Activated CD8-positive, alpha-beta T cell treated with anti-CD3 and anti-CD28 coated beads for 36 hours (primary cell): ENCODE measurements at regions of chr17 and their contacts with region 1.

Region 1: DNA sequence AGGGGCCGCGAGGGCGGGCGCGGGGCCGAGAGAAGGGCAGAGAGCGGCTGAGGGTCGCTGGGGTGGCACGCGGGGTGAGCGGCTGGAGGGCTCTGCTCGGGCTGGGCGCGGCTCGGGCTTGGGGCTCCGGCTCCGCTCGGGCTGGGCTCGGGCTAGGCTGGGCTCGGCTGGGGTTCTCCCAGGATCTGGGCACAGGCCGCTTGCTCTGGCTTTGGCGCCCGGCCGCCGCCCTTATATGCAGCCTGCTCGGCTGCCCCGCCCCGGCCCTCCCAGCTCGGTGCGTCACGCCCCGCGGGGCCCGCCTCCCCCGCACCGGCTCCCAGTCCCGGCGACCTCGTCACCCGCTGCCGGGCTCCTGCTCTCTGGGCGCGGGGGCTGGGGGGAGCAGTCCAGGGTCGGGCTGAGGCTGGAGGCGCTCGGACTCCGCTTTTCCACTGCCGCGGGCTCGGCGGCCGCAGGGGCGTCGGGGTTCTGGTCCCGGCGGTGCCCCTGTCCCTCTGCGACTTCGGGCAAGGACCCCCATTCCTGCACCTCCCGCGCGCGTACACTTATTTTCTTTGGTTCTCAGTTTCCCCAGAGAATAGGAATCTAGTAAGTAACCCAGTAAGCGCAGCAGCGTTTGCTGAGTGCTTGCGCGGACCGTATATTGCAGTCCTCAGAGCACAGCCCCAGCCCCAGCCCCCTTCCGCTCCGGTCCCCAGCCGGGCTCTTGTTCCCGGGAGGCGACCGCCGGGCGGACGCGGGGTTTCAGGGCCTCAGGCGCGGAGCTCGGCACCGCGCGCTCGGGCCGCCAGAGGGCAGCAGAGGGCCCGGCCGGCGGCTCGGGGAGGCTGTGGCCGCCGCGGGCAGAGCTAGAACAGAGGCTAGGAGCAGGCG is at the start of gene RASD1:
- DNase-seq: peak; percentile 84
- ATAC-seq: peak; percentile 88
- H3K4me3 Mint-ChIP-seq: peak within 1 kb of the TSS; percentile 62
- H3K27ac Mint-ChIP-seq: no peak within 1 kb of the TSS
- H3K4me1 Mint-ChIP-seq: peaks cover 15% of the 10 kb centered on the region
- H3K27me3 Mint-ChIP-seq: peaks cover 8% of the 10 kb centered on the region
- CTCF ChIP-seq: peak; percentile 97
- total RNA-seq, gene RASD1: 0.54 to 0.74 TPM

Region 2: DNA sequence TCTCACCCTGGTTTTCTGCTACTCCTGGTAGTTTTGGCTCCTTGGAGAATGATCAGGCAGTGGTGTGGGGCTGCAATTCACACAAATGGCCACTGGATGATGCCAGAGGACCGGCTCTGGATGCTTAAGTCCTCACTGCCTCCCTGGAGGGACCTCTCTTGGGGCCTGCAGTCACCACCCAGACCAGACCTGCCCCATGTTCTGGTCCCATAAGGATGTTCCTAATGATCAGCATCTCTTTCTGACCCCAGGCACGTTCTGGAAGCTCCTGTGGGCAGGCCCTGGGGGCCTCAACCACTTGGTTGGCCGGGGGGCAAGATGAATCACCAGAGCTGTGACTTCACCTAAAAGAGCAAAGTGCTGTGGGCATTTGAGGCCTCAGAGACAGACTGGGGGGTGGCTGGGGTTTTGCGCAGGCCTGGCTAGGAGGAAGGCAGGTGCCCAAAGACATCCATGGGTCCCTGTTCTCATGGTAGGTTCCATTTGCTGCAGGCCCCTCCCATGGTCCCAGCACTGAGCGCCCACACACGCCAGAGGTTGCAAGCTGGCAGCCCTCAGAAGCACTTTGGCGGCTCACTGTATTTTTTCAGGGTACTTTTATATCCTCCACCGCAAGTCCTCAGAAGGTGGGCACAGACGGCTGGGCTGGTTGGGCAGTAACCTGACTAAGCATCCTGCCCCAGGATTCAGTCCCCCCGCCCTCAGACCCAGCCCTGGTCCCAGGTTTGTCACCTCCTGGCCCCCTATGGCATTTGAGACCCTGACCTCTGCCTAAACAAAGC is 140.1 kb before region 1 on chr17:
- CTCF ChIA-PET with region 1: interaction called, 60 read pairs
- POLR2A ChIA-PET with region 1: no interaction called
- intact Hi-C with region 1: loop called (anchors 10 kb)
- DNase-seq: peak; percentile 85
- ATAC-seq: peak; percentile 92
- H3K4me3 Mint-ChIP-seq: no peak overlapping the region
- H3K27ac Mint-ChIP-seq: no peak overlapping the region
- H3K4me1 Mint-ChIP-seq: no peaks in the 10 kb centered on the region
- H3K27me3 Mint-ChIP-seq: no peaks in the 10 kb centered on the region
- CTCF ChIP-seq: peak; percentile 99

Region 3: GRCh38 chr17:17472333-17472920 is 24.0 kb before region 1 on chr17:
- CTCF ChIA-PET with region 1: interaction called, 11 read pairs
- POLR2A ChIA-PET with region 1: no interaction called
- intact Hi-C with region 1: no loop called
- DNase-seq: no peak
- ATAC-seq: no peak
- H3K4me3 Mint-ChIP-seq: no peak overlapping the region
- H3K27ac Mint-ChIP-seq: no peak overlapping the region
- H3K4me1 Mint-ChIP-seq: peaks cover 14% of the 10 kb centered on the region
- H3K27me3 Mint-ChIP-seq: peaks cover 2% of the 10 kb centered on the region
- CTCF ChIP-seq: no peak

Region 4: DNA sequence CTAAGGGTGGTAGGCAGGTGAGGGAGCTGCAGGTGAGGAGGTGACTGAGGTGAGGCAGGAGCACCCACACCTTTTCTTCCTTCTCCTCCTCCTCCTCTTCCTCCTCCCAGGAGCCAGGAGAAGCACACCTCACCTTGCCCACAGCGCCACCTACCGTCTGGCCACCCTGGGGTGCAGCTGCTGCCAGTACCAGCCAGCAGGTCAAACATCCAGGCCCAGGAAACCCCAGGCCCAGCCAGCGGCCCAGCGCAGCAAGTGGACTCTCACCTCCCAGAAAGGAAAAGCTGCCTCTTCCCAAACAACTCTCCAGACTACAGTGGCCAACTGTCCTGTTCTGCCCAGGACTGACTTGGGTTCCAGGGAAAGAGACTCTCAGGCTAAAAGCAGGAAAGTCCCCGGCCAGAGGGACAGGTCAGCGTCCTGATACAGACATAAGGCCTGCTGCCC is 72.3 kb after region 1 on chr17:
- CTCF ChIA-PET with region 1: interaction called, 31 read pairs
- POLR2A ChIA-PET with region 1: no interaction called
- intact Hi-C with region 1: loop called (anchors 5 kb)
- DNase-seq: peak; percentile 77
- ATAC-seq: peak; percentile 65
- H3K4me3 Mint-ChIP-seq: no peak overlapping the region
- H3K27ac Mint-ChIP-seq: no peak overlapping the region
- H3K4me1 Mint-ChIP-seq: no peaks in the 10 kb centered on the region
- H3K27me3 Mint-ChIP-seq: no peaks in the 10 kb centered on the region
- CTCF ChIP-seq: peak; percentile 76

Region 5: GRCh38 chr17:17613708-17614114 is 117.3 kb after region 1 on chr17:
- CTCF ChIA-PET with region 1: interaction called, 27 read pairs
- POLR2A ChIA-PET with region 1: no interaction called
- intact Hi-C with region 1: no loop called
- DNase-seq: peak; percentile 80
- ATAC-seq: peak; percentile 99
- H3K4me3 Mint-ChIP-seq: no peak overlapping the region
- H3K27ac Mint-ChIP-seq: no peak overlapping the region
- H3K4me1 Mint-ChIP-seq: peaks cover 3% of the 10 kb centered on the region
- H3K27me3 Mint-ChIP-seq: no peaks in the 10 kb centered on the region
- CTCF ChIP-seq: peak; percentile 59